Activated CD4-positive, alpha-beta T cell treated with anti-CD3 and anti-CD28 coated beads, Interleukin-2, amount 10 ng/mL, durations not matched to agents 24 days and 14 days (primary cell): ENCODE measurements at regions of chr1 and their contacts with region 1.

Region 1: DNA sequence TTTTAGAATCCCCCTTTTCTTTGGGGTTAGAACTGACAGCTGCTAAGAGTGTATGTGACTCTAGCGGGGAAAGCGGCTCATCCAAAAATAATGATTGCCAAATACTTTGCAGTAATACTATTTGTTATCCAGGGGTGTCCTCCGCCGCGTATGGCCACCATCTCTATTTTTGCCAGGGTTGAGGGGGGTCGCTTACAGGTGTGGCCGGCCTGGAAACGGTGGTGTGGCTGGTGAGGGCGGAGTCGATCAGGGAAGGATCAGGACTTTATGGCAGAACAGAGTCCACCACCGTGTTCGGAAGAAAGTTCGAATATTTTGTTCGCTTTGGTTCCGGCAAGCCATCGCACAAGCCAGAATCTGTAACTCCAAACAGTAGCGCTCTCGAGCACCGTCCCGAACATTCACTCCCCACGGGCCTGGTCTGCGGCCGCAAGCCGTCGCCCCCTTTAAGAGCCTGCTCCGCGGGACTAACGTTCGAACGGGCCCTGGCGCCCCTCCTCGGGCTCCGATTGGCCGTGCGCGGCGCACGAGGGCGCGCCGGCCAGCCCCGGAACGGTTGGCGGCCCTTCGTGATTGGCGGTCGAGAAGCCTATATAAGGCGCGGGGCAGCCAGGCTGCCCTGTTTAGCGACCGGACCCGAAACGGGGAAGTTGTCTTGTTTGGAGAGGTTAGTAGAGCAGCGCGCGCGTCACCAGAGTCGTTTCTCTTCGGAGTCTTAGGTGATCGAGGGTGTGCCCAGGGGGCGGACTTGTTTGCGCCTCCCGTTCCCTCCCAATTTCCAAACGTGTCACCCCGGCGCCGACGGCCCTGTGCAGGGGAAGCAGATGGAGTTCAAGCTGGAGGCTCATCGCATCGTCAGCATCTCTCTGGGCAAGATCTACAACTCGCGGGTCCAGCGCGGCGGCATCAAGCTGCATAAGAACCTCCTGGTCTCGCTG is at the start of gene IER5:
- DNase-seq: peak; percentile 99
- H3K4me3 Mint-ChIP-seq: peak within 1 kb of the TSS; percentile 99
- H3K27ac Mint-ChIP-seq: peak within 1 kb of the TSS; percentile 98
- H3K4me1 Mint-ChIP-seq: peaks cover 48% of the 10 kb centered on the region
- H3K27me3 Mint-ChIP-seq: peaks cover 6% of the 10 kb centered on the region
- total RNA-seq, gene IER5: 48.3 and 48.6 TPM in 2 replicates

Region 2: DNA sequence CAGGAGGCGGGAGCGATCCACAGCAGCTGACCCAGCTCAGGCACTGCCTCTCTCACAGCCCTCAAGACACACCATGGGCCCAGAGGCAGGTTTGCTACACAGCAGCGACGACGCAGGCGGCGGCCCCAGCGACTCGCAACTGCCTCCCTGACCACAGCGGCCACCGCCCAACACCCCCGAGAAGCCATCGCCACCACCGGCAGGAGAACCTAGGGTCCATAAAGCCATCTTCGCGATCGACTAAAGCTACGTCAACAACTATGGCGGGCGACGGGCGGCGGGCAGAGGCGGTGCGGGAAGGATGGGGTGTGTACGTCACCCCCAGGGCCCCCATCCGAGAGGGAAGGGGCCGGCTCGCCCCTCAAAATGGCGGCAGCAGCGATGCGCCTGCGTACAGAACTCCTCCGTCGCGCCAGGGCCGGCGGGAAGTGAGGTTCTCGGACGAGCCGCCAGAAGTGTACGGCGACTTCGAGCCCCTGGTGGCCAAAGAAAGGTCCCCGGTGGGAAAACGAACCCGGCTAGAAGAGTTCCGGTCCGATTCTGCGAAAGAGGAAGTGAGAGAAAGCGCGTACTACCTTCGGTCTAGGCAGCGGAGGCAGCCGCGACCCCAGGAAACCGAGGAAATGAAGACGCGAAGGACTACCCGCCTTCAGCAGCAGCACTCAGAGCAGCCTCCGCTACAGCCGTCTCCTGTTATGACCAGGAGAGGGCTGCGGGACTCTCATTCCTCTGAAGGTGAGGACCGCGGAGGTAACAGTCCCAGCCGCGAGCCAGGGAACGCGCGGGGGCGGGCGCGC is 1205.9 kb before region 1 on chr1 and contains the start of gene TOR1AIP1:
- intact Hi-C with region 1: loop called (anchors 2 kb)
- DNase-seq: peak; percentile 99
- H3K4me3 Mint-ChIP-seq: peak within 1 kb of the TSS; percentile 94
- H3K27ac Mint-ChIP-seq: peak within 1 kb of the TSS; percentile 99
- H3K4me1 Mint-ChIP-seq: peaks cover 45% of the 10 kb centered on the region
- H3K27me3 Mint-ChIP-seq: no peaks in the 10 kb centered on the region
- total RNA-seq, gene TOR1AIP1: 69.2 and 77.2 TPM in 2 replicates

Region 3: GRCh38 chr1:181014477-181015250 is 73.7 kb before region 1 on chr1:
- intact Hi-C with region 1: loop called (anchors 1 kb)
- DNase-seq: no peak
- H3K4me3 Mint-ChIP-seq: no peak overlapping the region
- H3K27ac Mint-ChIP-seq: no peak overlapping the region
- H3K4me1 Mint-ChIP-seq: peaks cover 25% of the 10 kb centered on the region
- H3K27me3 Mint-ChIP-seq: no peaks in the 10 kb centered on the region

Region 4: GRCh38 chr1:181033799-181034451 is 54.4 kb before region 1 on chr1 and contains the start of gene MR1:
- intact Hi-C with region 1: loop called (anchors 1 kb)
- DNase-seq: peak; percentile 88
- H3K4me3 Mint-ChIP-seq: peak within 1 kb of the TSS; percentile 96
- H3K27ac Mint-ChIP-seq: peak within 1 kb of the TSS; percentile 97
- H3K4me1 Mint-ChIP-seq: peaks cover 51% of the 10 kb centered on the region
- H3K27me3 Mint-ChIP-seq: peaks cover 5% of the 10 kb centered on the region
- total RNA-seq, gene MR1: 14.6 and 16.2 TPM in 2 replicates

Region 5: GRCh38 chr1:181099152-181100014 is 11.0 kb after region 1 on chr1:
- intact Hi-C with region 1: loop called (anchors 1 kb)
- DNase-seq: peak; percentile 83
- H3K4me3 Mint-ChIP-seq: peak overlapping the region; percentile 79
- H3K27ac Mint-ChIP-seq: peak overlapping the region; percentile 96
- H3K4me1 Mint-ChIP-seq: peaks cover 83% of the 10 kb centered on the region
- H3K27me3 Mint-ChIP-seq: no peaks in the 10 kb centered on the region

Region 6: DNA sequence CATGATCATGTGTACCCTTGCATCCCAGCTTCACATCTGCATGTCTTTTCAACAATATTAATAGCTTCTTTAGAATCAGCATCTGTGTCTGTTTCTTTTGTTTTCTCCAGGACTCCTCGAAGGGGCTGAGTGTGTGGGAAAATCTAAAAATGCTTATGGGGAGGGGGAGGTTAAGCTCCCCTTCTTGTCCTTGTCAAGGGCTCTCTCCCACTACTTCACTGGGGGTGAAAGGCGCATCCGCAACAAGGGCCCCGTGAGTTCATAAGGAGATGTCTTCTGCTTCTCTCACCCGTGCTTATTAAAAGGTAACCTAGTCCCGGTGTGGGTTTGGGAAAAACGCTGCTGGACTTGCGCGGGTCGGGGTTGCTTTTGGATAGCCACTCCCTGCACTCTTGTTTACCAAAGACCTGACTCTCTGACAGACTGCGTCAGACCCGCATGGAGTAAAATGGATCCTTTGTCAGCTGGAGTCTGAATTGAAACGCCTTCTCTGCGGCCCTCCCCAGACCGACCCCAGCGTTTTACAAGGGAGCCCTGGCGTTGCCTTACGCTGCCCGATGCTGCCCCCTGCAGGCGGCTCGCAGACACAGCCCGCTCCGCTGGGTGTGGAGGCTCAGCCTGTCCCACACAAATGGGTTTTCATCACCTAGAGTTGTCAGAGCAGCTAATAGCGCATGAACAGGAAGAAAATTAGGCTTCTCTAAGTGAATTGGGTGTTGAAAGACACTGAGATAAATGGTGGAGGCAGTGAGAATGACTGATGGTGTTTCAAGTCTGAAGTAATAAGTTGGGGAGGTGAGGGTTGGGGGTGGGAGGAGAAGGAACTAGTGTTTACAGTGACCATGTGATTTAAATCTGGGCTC is 54.0 kb after region 1 on chr1:
- intact Hi-C with region 1: loop called (anchors 1 kb)
- DNase-seq: peak; percentile 97
- H3K4me3 Mint-ChIP-seq: peak overlapping the region; percentile 70
- H3K27ac Mint-ChIP-seq: peak overlapping the region; percentile 90
- H3K4me1 Mint-ChIP-seq: peaks cover 63% of the 10 kb centered on the region
- H3K27me3 Mint-ChIP-seq: peaks cover 16% of the 10 kb centered on the region

Region 7: GRCh38 chr1:181206513-181206912 is 118.2 kb after region 1 on chr1:
- intact Hi-C with region 1: no loop called
- DNase-seq: no peak
- H3K4me3 Mint-ChIP-seq: no peak overlapping the region
- H3K27ac Mint-ChIP-seq: no peak overlapping the region
- H3K4me1 Mint-ChIP-seq: no peaks in the 10 kb centered on the region
- H3K27me3 Mint-ChIP-seq: peaks cover 13% of the 10 kb centered on the region

Region 8: DNA sequence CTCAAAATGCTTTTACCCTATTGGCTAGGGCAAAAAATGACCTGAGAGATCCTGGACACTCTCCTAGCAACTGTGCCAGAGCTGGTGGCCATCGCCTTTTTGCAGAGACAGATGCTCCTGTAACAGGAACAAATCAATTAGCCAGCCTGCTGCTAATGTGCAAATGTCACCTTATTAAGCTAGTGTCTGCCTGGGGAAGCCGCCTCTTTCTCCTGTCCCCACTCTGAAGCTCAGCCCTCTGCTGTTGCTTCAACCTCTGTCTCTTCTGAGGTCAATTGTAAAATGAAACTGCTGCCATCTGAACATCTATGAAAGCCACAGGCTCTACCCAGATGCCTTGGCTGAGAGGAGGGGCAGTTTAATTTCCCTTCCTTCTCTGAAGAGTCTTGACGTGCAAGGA is 309.5 kb after region 1 on chr1:
- intact Hi-C with region 1: loop called (anchors 10 kb)
- DNase-seq: peak; percentile 81
- H3K4me3 Mint-ChIP-seq: peak overlapping the region; percentile 63
- H3K27ac Mint-ChIP-seq: peak overlapping the region; percentile 87
- H3K4me1 Mint-ChIP-seq: peaks cover 39% of the 10 kb centered on the region
- H3K27me3 Mint-ChIP-seq: no peaks in the 10 kb centered on the region